Activated T-helper 2 cell treated with anti-CD3 and anti-CD28 coated beads, Interferon-gamma antibody, Interleukin-2, Interleukin-4, amounts not matched to agents 10 μg/mL and 5 μg/mL and 100 μg/mL, durations not matched to agents 14 hours and 24 hours and 36 hours (primary cell): ENCODE measurements at regions of chr15 and their contacts with region 1.

Region 1: GRCh38 chr15:82540055-82540983 is at the start of gene RPS17:
- DNase-seq: peak; percentile 98
- H3K4me3 Mint-ChIP-seq: peak within 1 kb of the TSS; percentile 95
- H3K27ac Mint-ChIP-seq: peak within 1 kb of the TSS; percentile 88
- H3K4me1 Mint-ChIP-seq: peaks cover 21% of the 10 kb centered on the region
- H3K27me3 Mint-ChIP-seq: peaks cover 3% of the 10 kb centered on the region
- total RNA-seq, gene RPS17: 2,500 and 2,516 TPM in 2 replicates

Region 2: GRCh38 chr15:81977464-81977863 is 562.9 kb before region 1 on chr15:
- intact Hi-C with region 1: no loop called
- DNase-seq: no peak
- H3K4me3 Mint-ChIP-seq: no peak overlapping the region
- H3K27ac Mint-ChIP-seq: no peak overlapping the region
- H3K4me1 Mint-ChIP-seq: no peaks in the 10 kb centered on the region
- H3K27me3 Mint-ChIP-seq: no peaks in the 10 kb centered on the region

Region 3: DNA sequence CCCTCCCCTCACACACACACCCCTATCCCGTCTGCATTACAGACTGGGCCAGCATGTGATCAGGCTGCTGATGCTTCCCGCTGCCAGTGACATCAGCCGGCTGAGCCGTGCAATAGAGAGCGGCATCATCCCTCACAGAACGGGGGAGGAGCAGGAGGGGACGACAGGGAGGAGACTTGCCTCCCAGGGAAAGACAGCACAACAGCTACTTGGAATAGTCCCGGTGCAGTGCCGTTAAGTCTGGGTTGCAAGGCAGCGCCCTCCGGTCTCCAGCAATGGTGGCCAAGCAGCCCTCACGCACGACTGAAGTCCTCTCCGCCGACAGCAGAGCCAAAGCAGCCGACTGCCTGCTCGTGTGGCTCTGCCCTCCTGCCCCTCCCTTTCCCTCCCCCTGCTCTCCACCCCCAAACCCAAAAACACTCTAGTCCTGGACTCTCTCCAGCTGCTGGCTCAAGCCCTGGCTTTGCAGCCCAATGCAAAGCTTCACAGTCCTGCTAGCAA is 31.5 kb after region 1 on chr15:
- intact Hi-C with region 1: no loop called
- DNase-seq: no peak
- H3K4me3 Mint-ChIP-seq: no peak overlapping the region
- H3K27ac Mint-ChIP-seq: no peak overlapping the region
- H3K4me1 Mint-ChIP-seq: no peaks in the 10 kb centered on the region
- H3K27me3 Mint-ChIP-seq: peaks cover 29% of the 10 kb centered on the region

Region 4: GRCh38 chr15:82699726-82700125 is 159.4 kb after region 1 on chr15:
- intact Hi-C with region 1: no loop called
- DNase-seq: no peak
- H3K4me3 Mint-ChIP-seq: no peak overlapping the region
- H3K27ac Mint-ChIP-seq: no peak overlapping the region
- H3K4me1 Mint-ChIP-seq: no peaks in the 10 kb centered on the region
- H3K27me3 Mint-ChIP-seq: no peaks in the 10 kb centered on the region

Region 5: DNA sequence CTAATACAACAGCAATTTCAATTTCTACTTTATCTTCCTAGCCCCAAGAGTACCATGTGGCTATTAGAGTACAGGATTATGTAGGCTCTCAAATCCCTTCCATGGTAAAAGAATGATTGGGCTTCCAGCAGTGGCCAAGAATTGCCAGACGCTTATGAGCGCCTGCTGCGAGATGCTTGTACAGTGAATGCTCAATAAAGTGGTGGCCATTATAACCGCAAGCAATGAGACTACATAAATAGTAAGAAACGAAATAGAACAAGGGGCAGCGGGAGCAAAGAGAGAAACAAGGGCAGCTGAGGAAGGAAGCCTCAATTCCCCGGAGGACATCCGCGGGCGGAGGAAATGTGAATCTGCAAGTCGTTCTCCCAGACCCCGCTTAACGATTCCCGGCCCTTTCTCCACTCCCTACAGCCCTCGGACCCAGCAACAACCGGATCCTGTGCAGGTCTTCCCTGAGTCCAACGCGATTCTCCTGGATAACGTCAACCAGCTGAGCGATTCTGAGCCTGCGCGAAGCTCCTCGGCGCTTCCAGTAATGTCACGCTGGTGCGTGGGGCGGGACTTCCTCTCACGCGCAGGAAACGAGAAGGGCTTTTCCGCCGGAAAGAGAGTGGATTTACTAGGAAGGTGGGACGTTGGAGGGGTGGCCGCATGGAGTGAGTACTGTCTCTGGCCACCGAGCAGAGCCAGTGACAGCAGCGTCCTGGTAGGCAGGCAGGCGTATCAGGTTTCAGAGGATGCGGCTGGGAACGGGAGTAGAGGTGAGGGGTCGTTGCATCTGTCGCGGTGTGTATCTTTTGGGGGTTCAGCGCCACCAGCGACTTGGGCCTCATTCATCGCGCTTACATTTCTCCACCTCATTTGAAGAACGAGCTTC is 209.9 kb after region 1 on chr15:
- intact Hi-C with region 1: loop called (anchors 10 kb)
- DNase-seq: peak; percentile 75
- H3K4me3 Mint-ChIP-seq: peak overlapping the region; percentile 100
- H3K27ac Mint-ChIP-seq: peak overlapping the region; percentile 99
- H3K4me1 Mint-ChIP-seq: peaks cover 28% of the 10 kb centered on the region
- H3K27me3 Mint-ChIP-seq: no peaks in the 10 kb centered on the region